Dendritic cell treated with granulocyte-macrophage colony-stimulating factor and Interleukin-4, amounts not matched to agents 40 ng/mL and 50 ng/mL, for 4 days (primary cell): ENCODE measurements at regions of chr2 and their contacts with region 1.

Region 1: GRCh38 chr2:84925724-84926376 is 20.4 kb downstream of the TMSB10 start:
- H3K4me3 Mint-ChIP-seq: peak overlapping the region; percentile 50
- H3K27ac Mint-ChIP-seq: peak overlapping the region; percentile 68
- H3K4me1 Mint-ChIP-seq: peaks cover 34% of the 10 kb centered on the region
- H3K27me3 Mint-ChIP-seq: peaks cover 9% of the 10 kb centered on the region

Region 2: GRCh38 chr2:84495539-84496146 is 430.2 kb before region 1 on chr2:
- intact Hi-C with region 1: loop called (anchors 1 kb)
- H3K4me3 Mint-ChIP-seq: no peak overlapping the region
- H3K27ac Mint-ChIP-seq: no peak overlapping the region
- H3K4me1 Mint-ChIP-seq: no peaks in the 10 kb centered on the region
- H3K27me3 Mint-ChIP-seq: peaks cover 3% of the 10 kb centered on the region

Region 3: GRCh38 chr2:84865181-84865783 is 60.6 kb before region 1 on chr2:
- intact Hi-C with region 1: loop called (anchors 1 kb)
- H3K4me3 Mint-ChIP-seq: no peak overlapping the region
- H3K27ac Mint-ChIP-seq: no peak overlapping the region
- H3K4me1 Mint-ChIP-seq: no peaks in the 10 kb centered on the region
- H3K27me3 Mint-ChIP-seq: peaks cover 6% of the 10 kb centered on the region

Region 4: GRCh38 chr2:84881581-84882414 is 44.1 kb before region 1 on chr2:
- intact Hi-C with region 1: loop called (anchors 2 kb)
- H3K4me3 Mint-ChIP-seq: peak overlapping the region; percentile 77
- H3K27ac Mint-ChIP-seq: peak overlapping the region; percentile 88
- H3K4me1 Mint-ChIP-seq: peaks cover 65% of the 10 kb centered on the region
- H3K27me3 Mint-ChIP-seq: peaks cover 50% of the 10 kb centered on the region

Region 5: GRCh38 chr2:84905181-84906107 is 20.4 kb before region 1 on chr2 and contains the start of gene TMSB10:
- intact Hi-C with region 1: loop called (anchors 1 kb)
- H3K4me3 Mint-ChIP-seq: peak within 1 kb of the TSS; percentile 98
- H3K27ac Mint-ChIP-seq: peak within 1 kb of the TSS; percentile 98
- H3K4me1 Mint-ChIP-seq: peaks cover 66% of the 10 kb centered on the region
- H3K27me3 Mint-ChIP-seq: no peaks in the 10 kb centered on the region

Region 6: DNA sequence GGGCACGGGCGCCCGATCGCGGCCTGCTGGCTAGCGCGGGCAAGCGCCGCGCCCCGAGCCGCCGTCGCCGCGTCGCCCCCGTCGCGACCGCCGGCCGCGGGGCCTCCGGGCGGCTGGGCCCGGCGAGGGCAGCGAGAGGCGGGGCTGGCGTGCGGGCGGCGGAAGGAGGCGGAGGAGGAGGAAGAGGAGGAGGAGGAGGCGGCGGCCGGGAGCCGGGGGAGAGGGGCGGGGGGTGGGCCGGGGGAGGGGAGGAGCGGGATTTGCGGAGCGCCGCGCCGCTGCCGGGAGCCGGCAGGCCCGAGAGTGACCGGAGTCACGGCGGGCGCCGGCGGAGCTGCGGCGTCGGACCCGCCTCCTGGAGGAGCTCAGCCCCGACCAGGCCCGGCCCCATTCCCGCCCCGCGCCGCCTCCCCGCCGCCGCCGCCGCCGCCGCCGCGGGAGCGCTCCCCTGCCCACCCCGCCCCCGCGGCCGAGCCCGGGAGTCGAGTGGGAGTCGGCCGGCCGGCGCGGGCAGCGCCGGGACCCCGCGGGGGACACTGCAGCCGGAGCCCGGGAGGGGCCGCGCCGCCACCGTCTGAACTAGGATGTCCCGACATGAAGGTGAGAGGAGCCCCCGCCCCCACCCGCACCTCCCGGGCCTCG is 45.1 kb after region 1 on chr2 and contains the start of gene KCMF1:
- intact Hi-C with region 1: loop called (anchors 5 kb)
- H3K4me3 Mint-ChIP-seq: peak within 1 kb of the TSS; percentile 97
- H3K27ac Mint-ChIP-seq: peak within 1 kb of the TSS; percentile 97
- H3K4me1 Mint-ChIP-seq: peaks cover 45% of the 10 kb centered on the region
- H3K27me3 Mint-ChIP-seq: no peaks in the 10 kb centered on the region

Region 7: DNA sequence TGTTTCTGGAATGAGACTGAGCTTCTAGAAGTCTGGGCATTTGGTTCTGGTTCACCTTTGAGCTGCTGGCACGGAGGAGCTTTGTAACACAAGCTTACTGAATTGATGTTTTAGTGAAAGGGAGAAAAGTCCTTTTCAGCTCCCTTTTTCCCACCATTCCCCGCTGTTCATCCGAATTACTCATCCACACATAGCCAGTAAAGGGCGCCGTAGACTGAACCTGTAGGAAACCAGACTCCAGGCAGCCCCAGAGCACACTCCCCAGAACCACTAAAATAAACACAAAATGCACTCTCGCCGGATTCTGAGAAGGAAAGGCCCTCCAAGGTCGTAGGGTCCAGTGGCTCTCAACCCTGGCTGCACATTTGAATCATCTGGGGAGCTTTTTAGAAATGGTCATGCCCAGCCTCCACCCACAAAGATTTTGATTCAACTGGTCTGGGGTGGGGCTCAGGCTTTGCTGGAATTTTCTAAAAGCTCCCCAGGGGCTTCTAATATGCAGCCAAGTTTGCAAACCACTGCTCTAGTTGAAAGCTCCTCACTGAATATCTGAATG is 237.0 kb after region 1 on chr2:
- intact Hi-C with region 1: no loop called
- H3K4me3 Mint-ChIP-seq: no peak overlapping the region
- H3K27ac Mint-ChIP-seq: no peak overlapping the region
- H3K4me1 Mint-ChIP-seq: no peaks in the 10 kb centered on the region
- H3K27me3 Mint-ChIP-seq: peaks cover 14% of the 10 kb centered on the region

Region 8: DNA sequence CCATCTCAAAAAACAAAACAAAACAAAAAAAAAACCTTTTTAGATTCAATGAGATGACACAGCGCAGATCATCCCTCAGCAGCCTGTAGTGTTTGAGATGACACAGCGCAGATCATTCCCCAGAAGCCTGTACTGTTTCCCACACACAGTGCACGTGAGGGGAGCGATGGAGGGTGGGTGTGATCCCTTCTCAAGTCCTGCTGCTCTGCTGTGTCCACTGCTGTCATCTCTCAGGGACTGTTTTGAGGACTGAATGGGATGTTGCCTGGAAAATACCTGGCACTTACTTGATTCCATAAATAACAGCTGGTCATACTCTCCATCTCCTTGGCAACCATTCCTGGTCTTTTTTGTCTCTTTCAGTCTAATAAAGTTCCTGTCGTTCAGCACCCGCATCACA is 376.3 kb after region 1 on chr2:
- intact Hi-C with region 1: loop called (anchors 2 kb)
- H3K4me3 Mint-ChIP-seq: no peak overlapping the region
- H3K27ac Mint-ChIP-seq: no peak overlapping the region
- H3K4me1 Mint-ChIP-seq: peaks cover 6% of the 10 kb centered on the region
- H3K27me3 Mint-ChIP-seq: peaks cover 25% of the 10 kb centered on the region